MCF 10A (cell line): ENCODE measurements at regions of chr1 and their contacts with region 1.

Region 1: GRCh38 chr1:93779540-93780192 is 98.0 kb upstream of the BCAR3 start:
- DNase-seq: peak; percentile 100
- H3K4me3 Mint-ChIP-seq: peak overlapping the region; percentile 44
- H3K27ac Mint-ChIP-seq: peak overlapping the region; percentile 92
- H3K4me1 Mint-ChIP-seq: peaks cover 51% of the 10 kb centered on the region
- H3K27me3 Mint-ChIP-seq: no peaks in the 10 kb centered on the region
- CTCF ChIP-seq: no peak

Region 2: DNA sequence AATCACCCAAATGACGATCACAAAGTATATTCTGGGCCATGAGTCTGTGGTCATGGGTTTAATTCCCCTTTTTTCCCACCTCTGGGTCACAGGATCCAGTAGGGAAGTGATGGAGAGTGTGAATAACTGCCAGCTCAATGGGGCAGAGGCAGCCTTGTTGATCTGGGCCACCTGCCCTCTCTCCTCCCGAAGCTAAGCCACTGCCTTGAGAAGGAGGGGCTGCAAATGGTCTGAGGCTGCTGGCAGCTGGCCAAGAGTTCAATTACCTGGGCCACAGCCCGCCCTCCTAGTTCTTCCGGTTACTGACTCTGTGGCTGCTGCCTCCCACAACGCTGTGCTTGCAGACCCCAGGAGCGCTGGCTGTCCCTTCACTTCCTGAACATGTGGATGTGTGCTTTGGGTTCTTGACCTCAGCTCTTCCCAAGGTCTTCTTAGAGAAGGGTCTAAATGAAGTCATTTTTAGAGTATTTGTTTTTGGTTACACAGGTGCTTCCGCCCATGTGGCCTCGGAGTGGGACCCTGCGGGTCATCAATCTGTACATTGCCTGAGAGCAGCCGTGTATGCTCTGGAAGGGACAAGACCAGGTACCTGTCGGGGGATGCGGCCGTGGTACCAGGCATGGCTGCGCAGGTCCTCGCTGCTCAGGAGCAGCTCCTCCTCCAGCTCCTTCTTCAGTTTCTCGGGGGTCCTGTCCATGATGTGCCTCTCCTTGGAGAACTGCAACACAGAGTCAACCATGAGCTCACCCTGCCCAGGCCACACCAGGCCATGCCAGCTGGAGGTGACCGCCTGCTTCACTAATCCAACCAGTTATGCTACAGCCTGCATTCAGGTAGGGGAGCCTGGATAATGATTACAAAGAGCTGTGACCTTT is 187.8 kb before region 1 on chr1:
- CTCF ChIA-PET with region 1: no interaction called
- POLR2A ChIA-PET with region 1: no interaction called
- intact Hi-C with region 1: no loop called
- DNase-seq: peak; percentile 46
- H3K4me3 Mint-ChIP-seq: no peak overlapping the region
- H3K27ac Mint-ChIP-seq: peak overlapping the region; percentile 49
- H3K4me1 Mint-ChIP-seq: peaks cover 59% of the 10 kb centered on the region
- H3K27me3 Mint-ChIP-seq: no peaks in the 10 kb centered on the region
- CTCF ChIP-seq: no peak

Region 3: DNA sequence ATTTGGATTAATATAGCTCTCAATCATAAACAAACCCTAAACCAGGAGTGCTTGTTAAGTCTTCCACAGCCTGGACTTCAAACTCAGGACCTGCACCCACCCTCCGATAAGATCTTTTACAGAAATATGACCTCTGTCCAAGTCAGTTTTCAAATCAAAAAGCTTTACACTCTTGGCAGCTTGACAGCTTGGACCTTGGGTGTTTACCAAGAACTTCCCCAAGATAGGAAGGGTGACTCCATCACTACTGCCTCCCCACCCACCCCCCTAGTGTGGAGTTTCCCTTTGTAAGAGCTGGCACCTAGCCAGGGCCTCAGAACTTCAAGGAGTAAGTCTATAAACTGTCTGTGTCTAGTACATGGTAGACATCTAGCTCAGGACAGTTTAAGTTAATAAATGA is 107.6 kb before region 1 on chr1:
- CTCF ChIA-PET with region 1: interaction called, 6 read pairs
- POLR2A ChIA-PET with region 1: interaction called, 15 read pairs
- intact Hi-C with region 1: no loop called
- DNase-seq: peak; percentile 89
- H3K4me3 Mint-ChIP-seq: no peak overlapping the region
- H3K27ac Mint-ChIP-seq: peak overlapping the region; percentile 42
- H3K4me1 Mint-ChIP-seq: peaks cover 63% of the 10 kb centered on the region
- H3K27me3 Mint-ChIP-seq: no peaks in the 10 kb centered on the region
- CTCF ChIP-seq: no peak

Region 4: DNA sequence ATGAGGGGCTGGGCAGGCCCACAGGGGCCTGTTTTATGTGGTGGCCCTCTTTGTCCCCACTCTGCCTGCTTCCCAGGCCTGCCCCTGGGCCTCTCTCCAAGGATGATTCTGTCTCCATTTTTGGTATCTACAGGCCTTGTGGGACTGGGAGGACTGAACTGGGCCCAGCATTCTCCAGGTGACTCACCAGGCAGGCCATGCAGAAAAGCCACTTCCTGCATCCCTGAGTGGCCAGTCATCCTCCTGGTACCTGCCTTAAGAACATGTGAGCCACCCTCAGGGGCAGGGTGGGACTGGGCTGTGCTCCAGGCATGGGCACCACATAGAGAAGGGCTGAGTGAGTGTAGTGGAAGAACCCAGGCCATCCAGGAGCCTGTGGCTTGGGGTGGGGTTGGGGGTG is 78.0 kb before region 1 on chr1:
- CTCF ChIA-PET with region 1: interaction called, 4 read pairs
- POLR2A ChIA-PET with region 1: interaction called, 26 read pairs
- intact Hi-C with region 1: no loop called
- DNase-seq: peak; percentile 99
- H3K4me3 Mint-ChIP-seq: peak overlapping the region; percentile 47
- H3K27ac Mint-ChIP-seq: peak overlapping the region; percentile 95
- H3K4me1 Mint-ChIP-seq: peaks cover 26% of the 10 kb centered on the region
- H3K27me3 Mint-ChIP-seq: no peaks in the 10 kb centered on the region
- CTCF ChIP-seq: no peak

Region 5: DNA sequence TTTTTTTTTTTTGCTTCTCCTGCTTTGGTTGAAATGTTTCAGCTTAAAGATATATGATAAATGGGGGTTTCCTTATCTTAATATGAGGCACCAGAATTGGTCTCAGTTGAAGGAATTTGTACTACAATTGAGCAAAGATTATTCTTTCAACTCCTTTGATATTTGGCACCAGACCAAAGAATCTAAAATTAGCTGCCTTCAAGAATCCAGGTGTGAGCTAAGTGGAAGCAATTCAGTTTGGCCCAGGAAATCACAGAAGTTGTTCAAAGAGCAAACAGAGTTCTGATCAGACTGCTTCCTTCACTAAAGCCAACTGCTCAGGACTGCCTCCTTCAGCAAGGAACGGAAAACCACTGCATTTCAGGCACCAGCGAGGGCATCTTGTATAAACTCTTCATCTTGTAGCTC is 29.8 kb before region 1 on chr1:
- CTCF ChIA-PET with region 1: interaction called, 6 read pairs
- POLR2A ChIA-PET with region 1: interaction called, 113 read pairs
- intact Hi-C with region 1: loop called (anchors 2 kb)
- DNase-seq: no peak
- H3K4me3 Mint-ChIP-seq: no peak overlapping the region
- H3K27ac Mint-ChIP-seq: peak overlapping the region; percentile 71
- H3K4me1 Mint-ChIP-seq: peaks cover 56% of the 10 kb centered on the region
- H3K27me3 Mint-ChIP-seq: no peaks in the 10 kb centered on the region
- CTCF ChIP-seq: no peak

Region 6: DNA sequence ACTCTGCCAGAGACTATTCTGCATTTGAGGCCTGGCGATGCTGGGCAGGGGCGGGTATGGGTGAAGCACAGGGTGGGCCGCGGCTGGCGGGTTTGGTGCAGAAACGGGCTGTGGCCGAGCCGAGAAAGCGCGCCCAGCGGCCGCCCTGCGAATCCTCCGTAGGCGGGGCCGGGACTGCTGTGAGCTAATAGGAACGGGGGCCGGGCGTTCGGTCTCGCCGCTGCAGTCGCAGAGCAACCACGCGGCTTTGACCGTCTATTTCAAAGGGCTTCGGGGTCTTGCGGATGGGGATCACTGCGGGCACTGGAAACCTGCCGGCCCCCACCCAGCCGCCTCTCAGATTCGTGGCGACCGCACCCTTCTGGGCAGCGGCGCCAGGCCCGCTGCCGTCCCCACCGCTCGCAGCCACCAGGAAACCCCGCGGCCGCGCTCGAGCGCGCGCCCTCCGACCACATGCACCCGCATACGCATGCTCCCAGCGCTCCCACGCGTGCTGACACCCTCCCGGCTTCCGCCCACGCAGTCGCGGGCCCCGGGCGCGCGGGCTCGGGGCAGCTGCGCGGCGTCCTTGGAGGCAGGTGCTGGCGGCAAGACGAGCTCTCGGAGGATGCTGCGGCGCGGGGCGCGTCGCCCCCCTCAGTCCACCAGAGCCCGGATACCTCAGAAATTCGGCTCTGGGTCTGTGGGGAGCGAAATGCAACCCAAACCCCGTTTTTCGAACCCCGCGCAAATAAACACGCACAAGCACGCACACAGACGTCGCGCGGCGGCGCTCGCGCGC is 66.7 kb after region 1 on chr1:
- CTCF ChIA-PET with region 1: interaction called, 4 read pairs
- POLR2A ChIA-PET with region 1: interaction called, 32 read pairs
- intact Hi-C with region 1: loop called (anchors 2 kb)
- DNase-seq: peak; percentile 83
- H3K4me3 Mint-ChIP-seq: peak overlapping the region; percentile 96
- H3K27ac Mint-ChIP-seq: peak overlapping the region; percentile 92
- H3K4me1 Mint-ChIP-seq: peaks cover 7% of the 10 kb centered on the region
- H3K27me3 Mint-ChIP-seq: no peaks in the 10 kb centered on the region
- CTCF ChIP-seq: no peak